HepG2 (cell line): ENCODE measurements at regions of chr1 and their contacts with region 1.

Region 1: GRCh38 chr1:145927063-145927886 is at the start of gene RBM8A:
- DNase-seq: peak; percentile 97
- ATAC-seq: peak; percentile 99
- H3K4me3 ChIP-seq: peak within 1 kb of the TSS; percentile 77 to 95 (median 83)
- H3K27ac ChIP-seq: peak within 1 kb of the TSS; percentile 88
- H3K4me1 ChIP-seq: peaks cover 17% of the 10 kb centered on the region
- H3K27me3 ChIP-seq: no peaks in the 10 kb centered on the region; a peak in 1 of 5 replicates
- CTCF ChIP-seq: peak; percentile 73
- EP300 ChIP-seq: 0 out of 4 replicates have a peak, but pooled peaks of 1 of the 2 experiments have one; percentile 10
- POLR2A ChIP-seq: peak; percentile 90 to 93
- RAD21 ChIP-seq: no peak; the same call in 1 of the 2 replicates
- total RNA-seq, gene RBM8A: 162 and 224 TPM in 2 replicates

Region 2: GRCh38 chr1:145804235-145805045 is 122.8 kb before region 1 on chr1:
- CTCF ChIA-PET with region 1: no interaction called
- POLR2A ChIA-PET with region 1: no interaction called
- in situ Hi-C with region 1: no loop called
- intact Hi-C with region 1: no loop called
- DNase-seq: no peak
- ATAC-seq: no peak
- H3K4me3 ChIP-seq: no peak overlapping the region
- H3K27ac ChIP-seq: no peak overlapping the region
- H3K4me1 ChIP-seq: no peaks in the 10 kb centered on the region
- H3K27me3 ChIP-seq: no peaks in the 10 kb centered on the region
- CTCF ChIP-seq: no peak
- EP300 ChIP-seq: no peak
- POLR2A ChIP-seq: no peak
- RAD21 ChIP-seq: no peak

Region 3: DNA sequence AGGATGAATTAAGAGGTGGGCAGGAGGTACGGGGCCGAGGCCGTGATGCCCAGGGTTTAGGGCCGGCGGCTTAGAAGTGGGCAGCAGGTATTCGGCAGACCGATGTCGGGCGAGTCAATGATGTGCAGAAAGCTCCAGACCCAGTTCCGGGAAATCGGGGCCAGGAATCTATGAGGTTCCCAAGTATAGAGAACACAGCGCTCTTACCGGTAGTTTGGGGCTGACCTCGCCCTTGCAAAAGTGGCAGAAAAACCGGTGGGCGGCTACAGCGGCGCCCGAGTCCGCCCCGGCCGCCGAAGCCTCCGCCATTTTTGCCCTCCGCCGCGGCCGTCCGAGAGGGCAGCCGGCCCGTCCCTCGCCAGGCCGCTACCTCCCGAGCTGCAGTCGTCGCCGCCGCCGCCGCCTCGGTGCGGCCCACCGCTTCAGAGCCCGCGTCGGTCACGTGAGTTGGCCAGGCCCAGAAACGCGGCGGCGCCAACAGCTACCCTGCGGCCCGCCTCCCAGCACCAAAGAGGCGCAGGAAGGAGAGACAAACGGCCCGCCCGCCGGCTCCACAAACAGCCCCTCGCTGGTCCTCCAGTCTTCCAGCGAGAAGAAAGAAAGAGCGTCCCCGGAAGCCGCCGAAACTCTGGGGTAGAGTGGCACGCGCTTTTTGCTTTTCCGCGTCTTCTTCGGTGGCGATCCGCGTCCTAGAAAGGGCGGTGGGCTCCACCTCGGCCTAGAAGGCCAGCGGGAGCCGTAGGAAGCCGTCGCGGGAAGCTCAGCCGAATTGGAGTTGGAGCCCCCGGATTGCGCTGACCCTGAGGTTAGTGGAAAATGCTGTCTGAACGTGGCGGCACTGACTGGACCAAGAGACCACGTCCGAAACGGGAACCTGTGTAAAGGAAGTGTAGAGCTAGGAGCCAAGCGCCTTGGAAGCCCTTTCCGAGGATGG is 103.4 kb before region 1 on chr1 and contains the starts of genes POLR3C and RNF115:
- CTCF ChIA-PET with region 1: no interaction called
- POLR2A ChIA-PET with region 1: interaction called, 12 read pairs
- in situ Hi-C with region 1: no loop called
- intact Hi-C with region 1: no loop called
- DNase-seq: peak; percentile 84
- ATAC-seq: peak; percentile 96
- H3K4me3 ChIP-seq: peak within 1 kb of the TSS; percentile 58 to 88 (median 73)
- H3K27ac ChIP-seq: peak within 1 kb of the TSS; percentile 93
- H3K4me1 ChIP-seq: peaks cover 14% of the 10 kb centered on the region
- H3K27me3 ChIP-seq: no peaks in the 10 kb centered on the region; a peak in 1 of 5 replicates
- CTCF ChIP-seq: 0 out of 2 replicates have a peak, but pooled peaks have one; percentile 10
- EP300 ChIP-seq: no peak
- POLR2A ChIP-seq: peak in 1 of 2 experiments; percentile 72; a peak in 3 of 4 replicates
- RAD21 ChIP-seq: peak; percentile 51; the same call in 1 of the 2 replicates
- total RNA-seq, gene POLR3C: 24.3 TPM in 2 replicates
- total RNA-seq, gene RNF115: 7.8 and 10.1 TPM in 2 replicates

Region 4: DNA sequence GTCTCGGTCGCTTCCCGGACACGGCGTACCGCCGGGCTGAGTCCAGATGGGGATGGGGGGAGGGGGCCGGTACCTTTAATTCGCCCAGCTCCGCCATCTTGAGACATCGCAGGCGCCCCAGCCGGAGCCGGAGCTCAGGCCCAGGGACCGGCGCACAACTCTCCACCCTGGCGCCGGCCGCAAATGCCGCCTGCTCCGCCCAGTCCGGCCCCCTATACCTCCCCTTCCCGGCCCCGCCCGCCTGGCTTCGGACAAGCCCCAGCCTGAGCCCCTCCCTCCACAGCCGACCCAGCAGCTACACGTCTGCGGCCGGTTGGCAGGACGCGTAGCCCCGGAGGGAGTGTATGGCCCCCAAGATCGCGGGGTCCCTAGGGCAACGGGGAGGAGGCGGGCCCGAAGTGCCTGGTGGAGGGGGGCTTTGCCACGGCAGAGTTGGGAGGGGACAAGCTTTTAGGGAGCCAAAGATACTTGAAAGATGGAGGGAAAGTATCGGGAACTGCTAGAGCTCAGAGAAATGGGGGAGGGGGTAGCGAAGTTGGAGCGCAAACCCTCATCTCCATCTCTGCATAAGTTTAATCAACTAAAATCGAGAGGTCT is 68.3 kb before region 1 on chr1 and contains the start of gene PIAS3:
- CTCF ChIA-PET with region 1: no interaction called
- POLR2A ChIA-PET with region 1: interaction called, 35 read pairs
- in situ Hi-C with region 1: no loop called
- intact Hi-C with region 1: no loop called
- DNase-seq: peak; percentile 76
- ATAC-seq: peak; percentile 92
- H3K4me3 ChIP-seq: peak within 1 kb of the TSS; percentile 82 to 92 (median 87)
- H3K27ac ChIP-seq: peak within 1 kb of the TSS; percentile 51
- H3K4me1 ChIP-seq: peaks cover 21% of the 10 kb centered on the region
- H3K27me3 ChIP-seq: 0 out of 5 replicates have a peak, but pooled peaks cover 0 to 3% of the 10 kb centered on the region in 2 experiments
- CTCF ChIP-seq: no peak
- EP300 ChIP-seq: no peak
- POLR2A ChIP-seq: peak in 1 of 2 experiments; percentile 50; a peak in 2 of 4 replicates
- RAD21 ChIP-seq: peak; percentile 17; the same call in 1 of the 2 replicates
- total RNA-seq, gene PIAS3: 3.7 and 4.6 TPM in 2 replicates

Region 5: GRCh38 chr1:145879775-145880174 is 47.5 kb before region 1 on chr1:
- CTCF ChIA-PET with region 1: no interaction called
- POLR2A ChIA-PET with region 1: no interaction called
- in situ Hi-C with region 1: no loop called
- intact Hi-C with region 1: no loop called
- DNase-seq: no peak
- ATAC-seq: no peak
- H3K4me3 ChIP-seq: no peak overlapping the region
- H3K27ac ChIP-seq: no peak overlapping the region
- H3K4me1 ChIP-seq: 0 out of 2 replicates have a peak, but pooled peaks cover 7% of the 10 kb centered on the region
- H3K27me3 ChIP-seq: peaks cover 2 to 46% of the 10 kb centered on the region in 2 experiments; a peak in 4 of 5 replicates
- CTCF ChIP-seq: no peak
- EP300 ChIP-seq: no peak
- POLR2A ChIP-seq: no peak
- RAD21 ChIP-seq: no peak

Region 6: DNA sequence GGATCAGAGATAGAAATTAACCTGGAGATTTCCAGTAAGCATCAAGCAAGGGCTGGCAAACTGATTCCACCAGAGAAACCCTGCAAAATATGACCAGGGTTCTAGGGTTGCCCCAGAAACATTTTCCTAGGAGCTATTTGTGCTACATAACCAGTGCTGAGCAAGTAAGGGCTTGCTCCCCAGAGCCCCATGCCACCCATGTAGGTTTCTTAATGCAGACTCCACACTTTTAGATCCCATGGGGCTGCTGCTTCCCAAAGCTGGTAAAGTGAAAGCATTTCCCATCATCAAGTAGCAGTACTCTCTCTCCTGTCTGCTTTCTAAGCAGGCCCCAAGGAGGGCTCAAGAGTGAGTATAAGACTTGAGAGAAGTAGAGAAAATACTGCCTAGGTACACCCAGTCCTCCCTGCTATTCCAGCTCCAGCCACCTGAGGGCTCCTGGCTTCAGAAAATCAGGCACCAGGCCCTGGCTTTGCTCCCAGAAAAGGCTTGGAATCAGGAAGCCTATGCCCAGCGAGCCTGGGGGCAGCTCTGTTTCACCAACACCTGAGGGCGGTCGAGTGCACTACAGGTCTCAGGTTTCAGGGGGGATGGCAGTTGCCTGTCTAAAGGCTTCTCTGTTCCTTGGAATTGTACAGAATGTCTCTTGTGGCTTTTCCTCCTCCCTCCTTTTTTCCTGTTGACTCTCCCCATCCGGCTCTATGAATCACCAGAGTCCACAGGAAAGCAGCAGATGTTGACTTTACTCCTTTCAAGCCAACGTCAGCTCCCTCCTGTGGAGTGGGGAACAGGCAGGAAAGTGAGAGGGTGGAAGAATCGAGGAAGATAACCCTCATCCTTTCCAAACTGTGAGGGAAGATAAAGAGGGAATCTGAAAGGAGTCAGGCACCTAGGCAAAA is 35.4 kb before region 1 on chr1:
- CTCF ChIA-PET with region 1: interaction called, 9 read pairs
- POLR2A ChIA-PET with region 1: interaction called, 29 read pairs
- in situ Hi-C with region 1: loop called (anchors 5 kb)
- intact Hi-C with region 1: loop called (anchors 5 kb)
- DNase-seq: peak; percentile 99
- ATAC-seq: peak; percentile 94
- H3K4me3 ChIP-seq: peak overlapping the region in 1 of 3 experiments; percentile 21; a peak in 2 of 6 replicates
- H3K27ac ChIP-seq: peak overlapping the region; percentile 63
- H3K4me1 ChIP-seq: peaks cover 81% of the 10 kb centered on the region
- H3K27me3 ChIP-seq: no peaks in the 10 kb centered on the region
- CTCF ChIP-seq: peak; percentile 98
- EP300 ChIP-seq: peak in 1 of 2 experiments; percentile 90; a peak in 2 of 4 replicates
- POLR2A ChIP-seq: no peak
- RAD21 ChIP-seq: peak; percentile 99

Region 7: DNA sequence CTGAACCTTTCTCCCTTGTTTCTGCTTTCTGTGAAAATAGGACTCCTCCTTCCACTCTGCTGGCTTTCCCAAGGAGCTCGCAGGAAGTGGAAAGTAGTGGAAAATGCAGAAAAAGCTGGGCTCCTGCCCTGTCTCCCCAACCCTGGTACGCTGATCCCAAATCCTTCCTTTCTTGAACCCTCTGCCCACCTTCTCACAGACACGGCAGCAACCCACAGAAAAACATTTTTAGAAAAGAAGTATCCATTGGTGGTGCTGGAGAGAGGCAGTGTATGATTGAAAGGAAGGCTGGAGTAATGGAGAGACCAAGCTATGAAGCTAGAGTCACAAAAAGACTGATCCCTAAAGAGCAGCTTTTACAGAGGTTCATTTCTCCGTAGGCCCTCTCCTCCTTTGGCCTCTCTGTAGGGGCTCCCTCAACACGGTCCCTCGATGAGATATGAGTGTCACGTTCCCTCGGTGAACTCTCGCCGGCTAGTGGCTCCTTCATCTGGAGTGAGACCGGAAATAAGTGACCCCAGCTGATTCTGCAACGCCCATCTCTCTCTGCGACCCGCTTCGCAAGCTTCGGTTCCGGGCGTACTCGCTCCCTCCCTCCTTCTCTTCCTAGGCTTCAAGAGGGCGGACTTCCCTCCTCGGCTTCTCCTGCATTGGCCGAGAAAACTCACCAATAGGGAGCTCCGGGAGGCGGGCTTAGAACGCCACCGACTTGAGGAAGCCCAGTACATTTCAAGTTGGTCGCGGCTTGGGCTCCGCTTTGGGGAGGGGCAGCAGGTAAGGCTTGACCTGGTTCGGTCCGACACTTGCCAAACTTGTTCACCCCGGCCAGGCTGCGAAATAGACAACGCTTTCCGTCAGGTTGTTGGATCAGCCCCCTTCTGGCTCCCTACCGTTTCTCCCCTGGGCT is 37.0 kb after region 1 on chr1 and contains the starts of genes ANKRD34A and POLR3GL:
- CTCF ChIA-PET with region 1: no interaction called
- POLR2A ChIA-PET with region 1: interaction called, 84 read pairs
- in situ Hi-C with region 1: loop called (anchors 5 kb)
- intact Hi-C with region 1: loop called (anchors 2 kb)
- DNase-seq: peak; percentile 92
- ATAC-seq: peak; percentile 88
- H3K4me3 ChIP-seq: peak within 1 kb of the TSS; percentile 77 to 84 (median 82)
- H3K27ac ChIP-seq: peak within 1 kb of the TSS; percentile 70
- H3K4me1 ChIP-seq: peaks cover 45% of the 10 kb centered on the region
- H3K27me3 ChIP-seq: peaks cover 0 to 28% of the 10 kb centered on the region in 2 experiments; a peak in 3 of 5 replicates
- CTCF ChIP-seq: peak; percentile 22
- EP300 ChIP-seq: no peak
- POLR2A ChIP-seq: peak; percentile 57 to 85
- RAD21 ChIP-seq: 0 out of 2 replicates have a peak, but pooled peaks have one; percentile 29
- total RNA-seq, gene ANKRD34A: 0.07 and 0.14 TPM in 2 replicates
- total RNA-seq, gene POLR3GL: 12.4 and 15.3 TPM in 2 replicates

Region 8: GRCh38 chr1:146036965-146037646 is 109.8 kb after region 1 on chr1:
- CTCF ChIA-PET with region 1: no interaction called
- POLR2A ChIA-PET with region 1: interaction called, 13 read pairs
- in situ Hi-C with region 1: no loop called
- intact Hi-C with region 1: no loop called
- DNase-seq: peak; percentile 90
- ATAC-seq: peak; percentile 69
- H3K4me3 ChIP-seq: peak overlapping the region; percentile 73 to 86 (median 84)
- H3K27ac ChIP-seq: peak overlapping the region; percentile 89
- H3K4me1 ChIP-seq: peaks cover 45% of the 10 kb centered on the region
- H3K27me3 ChIP-seq: no peaks in the 10 kb centered on the region; a peak in 1 of 5 replicates
- CTCF ChIP-seq: no peak
- EP300 ChIP-seq: no peak
- POLR2A ChIP-seq: no peak
- RAD21 ChIP-seq: no peak